MCF 10A (cell line): ENCODE measurements at regions of chr14 and their contacts with region 1.

Region 1: DNA sequence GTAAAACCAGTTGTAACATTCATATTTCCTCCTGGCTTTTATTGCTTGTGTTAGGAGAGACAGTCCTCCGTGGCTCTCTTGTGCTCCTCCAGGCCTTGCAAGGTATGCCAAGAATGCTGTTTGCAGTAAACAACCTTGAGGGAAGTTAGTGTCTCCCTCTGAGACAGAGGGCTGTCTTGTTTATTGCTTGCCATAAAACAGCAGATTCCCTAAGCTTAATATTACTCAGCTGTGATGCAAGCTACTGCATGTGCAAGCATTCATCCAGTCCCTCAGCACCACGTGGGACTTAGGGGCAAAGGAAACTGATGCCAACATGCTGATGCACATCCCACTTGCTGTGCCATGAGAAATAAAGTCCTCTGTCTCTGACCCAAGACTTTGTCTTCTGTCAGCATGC is 6.6 kb downstream of the POMT2 start:
- DNase-seq: peak; percentile 78
- H3K4me3 Mint-ChIP-seq: no peak overlapping the region
- H3K27ac Mint-ChIP-seq: peak overlapping the region; percentile 96
- H3K4me1 Mint-ChIP-seq: peaks cover 57% of the 10 kb centered on the region
- H3K27me3 Mint-ChIP-seq: no peaks in the 10 kb centered on the region
- CTCF ChIP-seq: no peak

Region 2: DNA sequence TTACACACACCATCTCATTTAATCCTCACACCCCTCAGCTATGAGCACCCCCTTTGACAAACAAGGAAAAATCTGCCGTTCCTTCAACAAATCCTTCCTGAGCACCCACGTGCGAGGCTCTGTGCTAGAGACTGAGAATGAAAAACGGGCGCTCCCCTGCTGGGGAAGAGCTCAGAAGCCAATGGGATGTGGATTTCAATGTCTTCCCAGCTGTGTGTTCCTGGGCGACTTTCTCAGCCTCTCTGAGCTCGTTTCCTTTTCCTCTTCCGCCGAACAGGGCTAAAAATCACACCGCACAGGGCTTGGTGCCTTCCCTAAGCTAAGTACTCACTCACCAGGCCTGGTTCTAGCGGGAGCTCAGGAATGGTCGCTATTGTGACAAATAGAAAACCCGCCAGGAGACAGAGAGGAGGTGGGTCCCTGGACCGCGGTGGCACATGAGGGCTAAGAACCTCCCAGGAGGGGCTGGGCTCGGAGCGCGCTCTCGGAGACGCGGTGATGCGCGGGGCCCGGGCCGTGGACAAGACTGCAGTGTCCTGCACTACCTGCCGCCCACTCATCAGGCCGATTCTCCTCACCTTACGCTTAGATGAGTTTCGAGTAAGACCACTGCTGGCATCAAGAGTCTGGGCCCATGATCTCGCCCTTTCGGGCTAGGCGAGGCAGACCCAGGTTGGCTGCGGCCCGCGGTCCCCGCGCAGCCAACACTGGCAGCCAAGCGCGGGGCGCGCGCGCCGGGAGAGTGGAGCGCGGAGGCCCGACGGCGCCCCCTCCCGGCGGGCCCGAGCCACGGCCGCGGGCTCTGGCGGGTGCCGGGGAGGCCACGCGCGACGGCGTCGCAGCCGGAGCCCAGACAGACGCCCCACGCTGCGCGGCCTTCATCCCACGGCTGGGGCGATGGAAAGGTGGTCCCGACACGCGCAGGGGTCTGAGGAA is 189.4 kb before region 1 on chr14:
- CTCF ChIA-PET with region 1: interaction called, 12 read pairs
- POLR2A ChIA-PET with region 1: interaction called, 6 read pairs
- intact Hi-C with region 1: no loop called
- DNase-seq: no peak
- H3K4me3 Mint-ChIP-seq: no peak overlapping the region
- H3K27ac Mint-ChIP-seq: no peak overlapping the region
- H3K4me1 Mint-ChIP-seq: peaks cover 33% of the 10 kb centered on the region
- H3K27me3 Mint-ChIP-seq: no peaks in the 10 kb centered on the region
- CTCF ChIP-seq: no peak

Region 3: DNA sequence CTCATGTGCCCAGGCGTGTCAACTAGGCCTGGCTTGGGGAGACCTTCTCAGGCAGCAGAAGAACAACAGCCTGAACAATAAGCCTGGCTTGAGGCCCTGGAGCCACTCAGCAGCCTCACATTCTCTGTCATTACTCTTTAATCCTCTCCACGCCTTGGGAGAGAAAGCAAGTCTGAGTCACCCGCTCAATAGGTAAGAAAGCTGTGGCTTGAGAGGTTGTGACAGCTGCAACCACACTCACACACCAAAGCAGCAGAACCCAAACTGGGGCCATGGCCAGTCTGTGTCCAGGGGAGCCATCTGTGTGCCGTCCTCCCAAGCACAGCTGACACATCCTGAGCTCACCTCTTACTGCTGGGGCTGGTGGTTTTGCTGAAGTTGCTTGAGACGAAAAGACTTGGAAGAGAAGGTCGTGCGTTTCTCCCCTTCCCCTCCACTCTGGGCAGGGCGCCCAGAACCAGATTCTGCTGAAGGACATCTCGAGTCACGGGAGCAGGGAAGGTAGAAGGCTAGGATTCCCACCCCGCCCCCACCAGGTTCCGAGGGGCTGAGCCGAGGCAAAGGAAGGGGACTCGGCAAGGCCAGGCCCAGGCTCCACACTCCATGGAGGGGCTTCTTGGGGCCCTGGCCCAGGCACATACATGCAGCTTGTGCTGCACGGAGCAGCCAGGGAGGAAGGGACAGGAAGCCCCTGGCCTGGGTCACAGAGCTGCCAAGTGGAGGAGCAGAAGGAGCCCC is 127.0 kb before region 1 on chr14:
- CTCF ChIA-PET with region 1: interaction called, 12 read pairs
- POLR2A ChIA-PET with region 1: interaction called, 6 read pairs
- intact Hi-C with region 1: no loop called
- DNase-seq: peak; percentile 85
- H3K4me3 Mint-ChIP-seq: peak overlapping the region; percentile 21
- H3K27ac Mint-ChIP-seq: peak overlapping the region; percentile 81
- H3K4me1 Mint-ChIP-seq: peaks cover 41% of the 10 kb centered on the region
- H3K27me3 Mint-ChIP-seq: no peaks in the 10 kb centered on the region
- CTCF ChIP-seq: no peak

Region 4: GRCh38 chr14:77290741-77291140 is 23.3 kb before region 1 on chr14:
- CTCF ChIA-PET with region 1: interaction called, 12 read pairs
- POLR2A ChIA-PET with region 1: interaction called, 3 read pairs
- intact Hi-C with region 1: no loop called
- DNase-seq: no peak
- H3K4me3 Mint-ChIP-seq: no peak overlapping the region
- H3K27ac Mint-ChIP-seq: no peak overlapping the region
- H3K4me1 Mint-ChIP-seq: no peaks in the 10 kb centered on the region
- H3K27me3 Mint-ChIP-seq: no peaks in the 10 kb centered on the region
- CTCF ChIP-seq: no peak

Region 5: DNA sequence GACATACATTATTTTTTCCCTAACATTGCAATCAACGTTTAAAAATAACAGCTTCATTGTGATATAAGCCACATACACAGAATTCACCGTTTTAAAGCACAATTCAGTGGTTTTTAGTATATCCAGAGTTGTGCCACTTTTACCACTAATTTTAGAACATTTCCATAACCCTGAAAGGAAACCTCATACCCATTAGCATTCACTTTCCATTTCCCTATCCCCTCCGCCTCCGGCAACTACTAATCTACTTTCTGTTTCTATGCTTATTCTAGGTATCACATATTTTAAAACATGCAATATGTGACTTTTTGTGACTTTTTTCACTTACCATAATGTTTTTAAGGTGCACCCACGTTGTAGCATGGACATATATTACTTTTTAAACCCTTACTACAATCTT is 240.2 kb after region 1 on chr14:
- CTCF ChIA-PET with region 1: interaction called, 6 read pairs
- POLR2A ChIA-PET with region 1: no interaction called
- intact Hi-C with region 1: loop called (anchors 5 kb)
- DNase-seq: no peak
- H3K4me3 Mint-ChIP-seq: no peak overlapping the region
- H3K27ac Mint-ChIP-seq: no peak overlapping the region
- H3K4me1 Mint-ChIP-seq: no peaks in the 10 kb centered on the region
- H3K27me3 Mint-ChIP-seq: no peaks in the 10 kb centered on the region
- CTCF ChIP-seq: no peak

Region 6: GRCh38 chr14:78202163-78202562 is 888.1 kb after region 1 on chr14:
- CTCF ChIA-PET with region 1: no interaction called
- POLR2A ChIA-PET with region 1: no interaction called
- intact Hi-C with region 1: no loop called
- DNase-seq: no peak
- H3K4me3 Mint-ChIP-seq: no peak overlapping the region
- H3K27ac Mint-ChIP-seq: no peak overlapping the region
- H3K4me1 Mint-ChIP-seq: no peaks in the 10 kb centered on the region
- H3K27me3 Mint-ChIP-seq: peaks cover 7% of the 10 kb centered on the region
- CTCF ChIP-seq: no peak